ENCODE measurements at regions of chr5 and their contacts with region 1.

Region 1: GRCh38 chr5:139765409-139766217 is 30.0 kb upstream of the PSD2 start:
- DNase-seq: peak; percentile 83
- H3K4me3 Mint-ChIP-seq: peak overlapping the region; percentile 64
- H3K27ac Mint-ChIP-seq: no peak overlapping the region
- H3K4me1 Mint-ChIP-seq: peaks cover 9% of the 10 kb centered on the region
- H3K27me3 Mint-ChIP-seq: peaks cover 38% of the 10 kb centered on the region

Region 2: DNA sequence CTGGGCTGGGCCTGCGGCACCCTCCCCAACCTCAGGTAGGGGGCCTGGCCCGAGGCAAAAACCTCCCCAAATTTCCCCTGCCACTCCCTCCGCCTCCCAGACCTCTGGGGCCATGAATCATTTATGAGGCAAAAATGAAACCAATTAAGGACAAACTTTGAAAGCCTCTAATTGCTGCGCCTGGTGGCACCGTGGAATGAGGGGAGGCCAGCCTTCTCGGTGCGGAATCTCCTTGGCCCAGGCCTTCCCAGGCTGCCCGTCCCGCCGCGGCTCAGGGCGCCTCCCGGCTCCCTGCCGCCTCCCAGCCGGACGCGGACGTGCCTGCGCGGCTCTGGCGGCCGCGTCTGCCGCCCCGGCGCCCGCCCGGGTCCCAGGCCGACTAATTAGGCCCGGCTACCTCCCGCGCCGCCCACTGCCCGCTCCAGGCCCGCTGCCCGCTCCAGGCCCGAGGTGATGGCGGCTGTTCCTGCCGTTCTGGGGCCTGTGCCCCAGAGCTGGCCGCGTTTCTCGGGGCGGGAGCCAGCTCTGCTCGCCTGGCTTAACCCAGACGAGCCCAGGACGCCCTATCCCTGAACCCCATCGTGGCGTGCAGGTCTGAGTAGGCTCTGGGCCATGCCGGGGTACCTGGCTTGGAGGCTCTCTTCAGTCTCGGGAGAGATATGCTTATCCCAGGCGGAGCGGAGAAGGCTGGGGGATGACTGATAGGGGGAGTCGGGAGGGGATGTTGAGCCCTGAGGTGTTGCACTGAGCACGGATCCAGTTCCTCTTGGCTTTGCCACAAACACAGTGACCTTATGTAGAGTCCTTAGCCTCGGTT is 97.3 kb before region 1 on chr5:
- CTCF ChIA-PET with region 1: interaction called, 13 read pairs
- POLR2A ChIA-PET with region 1: interaction called, 3 read pairs
- DNase-seq: peak; percentile 47
- H3K4me3 Mint-ChIP-seq: peak overlapping the region; percentile 65
- H3K27ac Mint-ChIP-seq: peak overlapping the region; percentile 40
- H3K4me1 Mint-ChIP-seq: peaks cover 36% of the 10 kb centered on the region
- H3K27me3 Mint-ChIP-seq: peaks cover 7% of the 10 kb centered on the region

Region 3: GRCh38 chr5:139711067-139711905 is 54.3 kb before region 1 on chr5:
- CTCF ChIA-PET with region 1: interaction called, 11 read pairs
- POLR2A ChIA-PET with region 1: no interaction called
- DNase-seq: peak; percentile 46
- H3K4me3 Mint-ChIP-seq: peak overlapping the region; percentile 53
- H3K27ac Mint-ChIP-seq: no peak overlapping the region
- H3K4me1 Mint-ChIP-seq: peaks cover 10% of the 10 kb centered on the region
- H3K27me3 Mint-ChIP-seq: peaks cover 45% of the 10 kb centered on the region

Region 4: GRCh38 chr5:139808493-139809139 is 43.0 kb after region 1 on chr5:
- CTCF ChIA-PET with region 1: no interaction called
- POLR2A ChIA-PET with region 1: no interaction called
- DNase-seq: peak; percentile 52
- H3K4me3 Mint-ChIP-seq: no peak overlapping the region
- H3K27ac Mint-ChIP-seq: no peak overlapping the region
- H3K4me1 Mint-ChIP-seq: no peaks in the 10 kb centered on the region
- H3K27me3 Mint-ChIP-seq: peaks cover 1% of the 10 kb centered on the region

Region 5: DNA sequence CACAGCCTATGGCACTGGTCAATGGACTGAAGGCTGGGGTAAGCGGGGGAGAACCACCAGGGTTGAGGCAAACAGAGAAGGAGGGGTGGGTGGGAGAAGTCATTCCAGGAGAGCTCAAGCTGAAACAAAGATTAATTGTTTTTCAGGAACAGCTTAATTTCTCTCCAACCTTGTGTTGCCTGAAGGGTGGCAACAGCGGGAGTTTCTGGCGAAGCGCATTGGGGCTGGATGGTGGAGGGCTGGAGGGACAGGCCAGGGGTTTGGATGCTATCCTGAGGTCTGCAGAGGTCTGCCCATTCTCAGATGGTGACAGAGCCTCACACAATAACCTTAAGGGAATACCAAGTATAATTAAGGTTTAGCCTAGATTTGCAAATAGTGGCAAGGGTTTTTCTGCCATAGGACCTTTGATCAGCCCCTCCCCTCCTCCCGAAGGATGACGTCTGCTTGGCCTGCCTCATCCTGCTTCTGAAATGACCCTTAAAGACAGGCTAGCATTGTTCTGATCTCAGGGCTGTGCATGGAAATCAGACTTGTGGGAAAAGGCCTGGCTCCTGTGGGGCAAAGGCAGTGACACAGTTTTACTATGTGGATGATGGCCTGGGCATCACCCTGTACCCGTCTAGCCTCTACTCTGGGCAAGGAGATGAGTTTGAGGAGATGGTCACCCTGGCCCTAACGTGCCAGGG is 62.7 kb after region 1 on chr5:
- CTCF ChIA-PET with region 1: no interaction called
- POLR2A ChIA-PET with region 1: no interaction called
- DNase-seq: no peak
- H3K4me3 Mint-ChIP-seq: no peak overlapping the region
- H3K27ac Mint-ChIP-seq: no peak overlapping the region
- H3K4me1 Mint-ChIP-seq: no peaks in the 10 kb centered on the region
- H3K27me3 Mint-ChIP-seq: peaks cover 36% of the 10 kb centered on the region

Measured in activated CD4-positive, alpha-beta memory T cell treated with anti-CD3 and anti-CD28 coated beads, Interleukin-2, amount 10 ng/mL, durations not matched to agents 7 days and 5 days (primary cell).